Calu3 (cell line): ENCODE measurements at regions of chr14 and their contacts with region 1.

Region 1: GRCh38 chr14:47539031-47539461 is 136.4 kb downstream of the MDGA2 start:
- DNase-seq: peak; percentile 2
- H3K4me3 Mint-ChIP-seq: no peak overlapping the region
- H3K27ac Mint-ChIP-seq: no peak overlapping the region
- H3K4me1 Mint-ChIP-seq: no peaks in the 10 kb centered on the region
- H3K27me3 Mint-ChIP-seq: no peaks in the 10 kb centered on the region
- CTCF ChIP-seq: no peak

Region 2: GRCh38 chr14:47442209-47442608 is 96.8 kb before region 1 on chr14:
- CTCF ChIA-PET with region 1: interaction called, 3 read pairs
- intact Hi-C with region 1: loop called (anchors 1 kb)
- DNase-seq: peak; percentile 34
- H3K4me3 Mint-ChIP-seq: no peak overlapping the region
- H3K27ac Mint-ChIP-seq: no peak overlapping the region
- H3K4me1 Mint-ChIP-seq: no peaks in the 10 kb centered on the region
- H3K27me3 Mint-ChIP-seq: no peaks in the 10 kb centered on the region
- CTCF ChIP-seq: no peak